ENCODE measurements at regions of chr12 and their contacts with region 1.

Region 1: GRCh38 chr12:47979166-47979565 is 15.8 kb downstream of the TMEM106C start:
- DNase-seq: no peak
- ATAC-seq: no peak
- H3K4me3 ChIP-seq: no peak overlapping the region
- H3K27ac ChIP-seq: no peak overlapping the region
- H3K4me1 ChIP-seq: no peaks in the 10 kb centered on the region
- H3K27me3 ChIP-seq: no peaks in the 10 kb centered on the region
- CTCF ChIP-seq: no peak

Region 2: DNA sequence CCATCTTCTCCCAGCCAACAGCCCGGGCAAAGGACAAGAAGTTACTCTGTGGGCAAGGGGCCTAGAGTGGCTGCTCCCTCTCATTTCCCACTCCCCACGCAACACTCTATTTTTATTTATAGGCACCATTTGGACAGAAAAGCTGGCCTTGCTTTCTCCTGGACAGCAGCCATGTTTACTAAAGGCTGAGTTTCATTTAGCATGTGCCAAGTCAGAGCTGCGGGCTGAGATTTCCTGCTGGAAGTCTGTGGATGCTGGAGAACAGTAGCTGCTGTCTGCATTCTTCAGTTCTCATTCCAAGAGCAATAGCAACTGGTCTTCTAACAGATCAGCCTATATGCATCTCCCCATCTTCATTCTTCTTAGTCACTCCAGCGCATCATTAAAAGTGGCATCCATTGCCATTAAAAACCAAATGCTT is 16.8 kb after region 1 on chr12:
- intact Hi-C with region 1: no loop called
- DNase-seq: no peak
- ATAC-seq: peak in 3 of 4 donors; percentile 63 to 80 (median 79)
- H3K4me3 ChIP-seq: no peak overlapping the region
- H3K27ac ChIP-seq: no peak overlapping the region
- H3K4me1 ChIP-seq: peaks cover 12% of the 10 kb centered on the region
- H3K27me3 ChIP-seq: no peaks in the 10 kb centered on the region
- CTCF ChIP-seq: no peak

Region 3: DNA sequence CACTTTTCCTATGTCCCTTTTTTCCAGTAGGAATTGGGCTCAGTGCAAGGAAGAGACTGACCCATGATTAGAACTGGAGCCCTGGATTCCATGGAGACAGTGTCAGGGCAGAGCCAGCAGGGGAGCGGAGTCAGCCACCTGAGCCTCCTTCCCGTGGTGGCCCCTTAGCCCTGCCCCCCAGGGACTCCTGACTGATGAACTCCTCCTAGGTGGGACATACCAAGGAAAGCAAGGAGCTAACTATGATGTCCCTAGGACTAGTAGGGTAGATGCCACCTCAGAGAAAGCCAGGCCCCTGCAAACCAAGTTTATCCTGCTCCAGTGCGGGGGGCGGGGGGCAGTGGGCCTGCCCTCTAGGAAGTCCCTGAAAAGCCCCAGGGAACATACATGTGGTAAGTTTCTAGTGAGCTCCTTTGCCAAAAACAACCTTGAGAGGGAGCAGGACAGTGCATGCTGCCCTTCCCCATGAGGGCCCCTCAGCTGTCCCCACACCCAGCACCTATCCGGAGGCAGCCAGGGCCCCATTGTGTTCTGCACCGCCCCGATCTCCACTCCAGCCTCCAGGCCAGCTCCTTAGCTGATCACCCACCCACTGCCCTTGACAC is 31.3 kb after region 1 on chr12:
- intact Hi-C with region 1: loop called in 1 of 2 experiments (anchors 2 kb)
- DNase-seq: no peak
- ATAC-seq: no peak
- H3K4me3 ChIP-seq: no peak overlapping the region
- H3K27ac ChIP-seq: no peak overlapping the region
- H3K4me1 ChIP-seq: no peaks in the 10 kb centered on the region
- H3K27me3 ChIP-seq: peaks cover 0 to 25% (median 0%) of the 10 kb centered on the region in 3 donors
- CTCF ChIP-seq: no peak

Region 4: GRCh38 chr12:48105862-48106680 is 126.9 kb after region 1 on chr12 and contains the start of gene SENP1:
- intact Hi-C with region 1: no loop called
- DNase-seq: peak; percentile 92 to 95
- ATAC-seq: peak; percentile 95 to 99 (median 98)
- H3K4me3 ChIP-seq: peak within 1 kb of the TSS; percentile 75
- H3K27ac ChIP-seq: peak within 1 kb of the TSS; percentile 98
- H3K4me1 ChIP-seq: peaks cover 16% of the 10 kb centered on the region
- H3K27me3 ChIP-seq: no peaks in the 10 kb centered on the region
- CTCF ChIP-seq: no peak
- total RNA-seq, gene SENP1: 6.3 to 10.2 (median 8.0) TPM